ENCODE measurements at regions of chr1 and their contacts with region 1.

Region 1: GRCh38 chr1:156618853-156619581 is at the start of gene HAPLN2:
- DNase-seq: peak in 1 of 2 experiments; percentile 84
- H3K4me3 ChIP-seq: peak within 1 kb of the TSS in 1 of 4 experiments; percentile 32; a peak in 2 of 8 replicates
- H3K27ac ChIP-seq: no peak within 1 kb of the TSS
- H3K4me1 ChIP-seq: no peaks in the 10 kb centered on the region; a peak in 2 of 7 replicates
- H3K27me3 ChIP-seq: peaks cover 14 to 34% (median 27%) of the 10 kb centered on the region in 4 experiments
- CTCF ChIP-seq: peak; percentile 72 to 94 (median 92)
- EP300 ChIP-seq: no peak
- POLR2A ChIP-seq: no peak
- RAD21 ChIP-seq: peak; percentile 44 to 53
- total RNA-seq, gene HAPLN2: 0.19 TPM in 1 of 2 replicates, not detected in the other

Region 2: GRCh38 chr1:156583821-156584622 is 35.0 kb before region 1 on chr1:
- CTCF ChIA-PET with region 1: interaction called, 17 read pairs
- POLR2A ChIA-PET with region 1: interaction called, 3 read pairs
- DNase-seq: peak in 1 of 2 experiments; percentile 88
- H3K4me3 ChIP-seq: peak overlapping the region in 1 of 4 experiments; percentile 42; a peak in 3 of 8 replicates
- H3K27ac ChIP-seq: no peak overlapping the region
- H3K4me1 ChIP-seq: peaks cover 0 to 10% (median 3%) of the 10 kb centered on the region in 4 experiments; a peak in 5 of 7 replicates
- H3K27me3 ChIP-seq: no peaks in the 10 kb centered on the region
- CTCF ChIP-seq: peak; percentile 50 to 87 (median 85)
- EP300 ChIP-seq: no peak
- POLR2A ChIP-seq: no peak
- RAD21 ChIP-seq: peak; percentile 81 to 86

Region 3: GRCh38 chr1:156591432-156592157 is 27.4 kb before region 1 on chr1 and contains the start of gene NAXE:
- CTCF ChIA-PET with region 1: interaction called, 19 read pairs
- POLR2A ChIA-PET with region 1: interaction called, 11 read pairs
- DNase-seq: peak in 1 of 2 experiments; percentile 80
- H3K4me3 ChIP-seq: peak within 1 kb of the TSS; percentile 62 to 87 (median 81)
- H3K27ac ChIP-seq: peak within 1 kb of the TSS; percentile 26; the same call in 1 of the 2 replicates
- H3K4me1 ChIP-seq: peaks cover 0 to 10% (median 2%) of the 10 kb centered on the region in 4 experiments; a peak in 4 of 7 replicates
- H3K27me3 ChIP-seq: no peaks in the 10 kb centered on the region
- CTCF ChIP-seq: no peak
- EP300 ChIP-seq: no peak
- POLR2A ChIP-seq: peak; percentile 64; a peak in 2 of 3 replicates
- RAD21 ChIP-seq: no peak
- total RNA-seq, gene NAXE: 73.1 and 75.4 TPM in 2 replicates

Region 4: GRCh38 chr1:156601122-156601830 is 17.7 kb before region 1 on chr1 and contains the start of gene GPATCH4:
- CTCF ChIA-PET with region 1: interaction called, 25 read pairs
- POLR2A ChIA-PET with region 1: no interaction called
- DNase-seq: peak in 1 of 2 experiments; percentile 86
- H3K4me3 ChIP-seq: peak within 1 kb of the TSS; percentile 86 to 97 (median 91)
- H3K27ac ChIP-seq: peak within 1 kb of the TSS; percentile 73
- H3K4me1 ChIP-seq: peaks cover 0 to 8% (median 3%) of the 10 kb centered on the region in 4 experiments; a peak in 5 of 7 replicates
- H3K27me3 ChIP-seq: no peaks in the 10 kb centered on the region
- CTCF ChIP-seq: no peak
- EP300 ChIP-seq: no peak
- POLR2A ChIP-seq: peak; percentile 66 to 80; a peak in 2 of 3 replicates
- RAD21 ChIP-seq: no peak
- total RNA-seq, gene GPATCH4: 47.9 and 48.5 TPM in 2 replicates

Measured in H1 (cell line).